ENCODE measurements at regions of chr3 and their contacts with region 1.

Region 1: DNA sequence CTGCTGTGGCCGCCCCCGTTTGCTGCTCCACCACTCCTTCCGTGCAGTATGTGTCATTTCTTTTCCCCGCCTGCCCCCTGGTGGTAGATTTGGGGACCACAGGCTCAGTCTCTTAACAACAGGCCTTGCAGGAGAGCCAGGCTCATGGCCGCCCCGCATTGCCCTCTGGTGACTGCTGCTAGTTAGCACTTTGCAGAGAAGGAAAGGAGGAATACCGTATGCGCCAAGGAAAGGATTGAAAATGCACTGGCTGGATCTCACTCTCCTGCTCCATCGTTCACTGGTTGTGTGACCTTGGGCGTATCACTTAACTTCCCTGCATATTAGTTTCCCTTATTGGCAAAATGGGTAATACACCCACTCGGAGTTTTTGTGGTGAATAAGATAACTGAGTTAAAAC is 39.3 kb upstream of the PXYLP1 start:
- DNase-seq: peak; percentile 96
- ATAC-seq: peak; percentile 99

Region 2: GRCh38 chr3:140922634-140923033 is 269.7 kb before region 1 on chr3:
- intact Hi-C with region 1: loop called in 1 of 2 experiments (anchors 10 kb)
- DNase-seq: no peak
- ATAC-seq: peak in 1 of 2 donors; percentile 10

Region 3: GRCh38 chr3:140980628-140981027 is 211.7 kb before region 1 on chr3:
- intact Hi-C with region 1: no loop called
- DNase-seq: no peak
- ATAC-seq: no peak

Region 4: DNA sequence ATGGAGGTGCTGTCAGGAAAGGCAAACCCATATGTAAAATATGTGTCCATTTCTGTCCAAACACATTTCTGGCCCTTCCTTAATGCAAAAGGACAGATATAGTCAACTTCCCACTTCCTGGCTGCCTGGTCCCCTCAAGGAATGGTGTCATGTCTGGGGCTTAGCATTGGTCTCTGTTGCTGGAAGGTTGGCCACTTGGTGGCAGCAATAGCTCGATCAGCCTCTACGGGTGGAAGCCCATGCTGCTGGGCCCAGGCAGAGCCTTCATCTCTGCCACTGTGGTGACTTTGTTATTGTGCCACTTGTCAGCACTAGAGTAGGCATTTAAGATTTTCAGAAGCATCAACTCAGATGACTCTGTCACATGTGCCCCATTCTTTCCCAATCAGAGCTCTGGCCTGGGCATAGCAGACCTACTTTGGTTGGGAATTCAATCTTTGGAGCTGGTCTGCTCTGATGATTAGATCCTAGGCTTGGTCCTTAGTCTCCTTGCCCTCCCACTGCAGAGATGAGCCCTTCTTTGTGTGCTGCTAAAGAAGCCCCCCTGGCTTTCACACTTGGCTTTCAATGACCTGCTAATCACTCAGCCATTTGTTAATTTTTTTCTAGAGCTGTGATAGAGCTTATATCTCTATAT is 192.2 kb before region 1 on chr3:
- intact Hi-C with region 1: loop called in 1 of 2 experiments (anchors 1 kb)
- DNase-seq: peak; percentile 74
- ATAC-seq: peak; percentile 95 to 96

Region 5: GRCh38 chr3:141011232-141011996 is 180.9 kb before region 1 on chr3:
- intact Hi-C with region 1: loop called in 1 of 2 experiments (anchors 5 kb)
- DNase-seq: peak; percentile 85
- ATAC-seq: peak; percentile 81 to 87

Region 6: GRCh38 chr3:141050576-141051442 is 141.5 kb before region 1 on chr3 and contains the start of gene SPSB4:
- intact Hi-C with region 1: loop called in 1 of 2 experiments (anchors 2 kb)
- DNase-seq: peak; percentile 76
- ATAC-seq: peak; percentile 92 to 94
- total RNA-seq, gene SPSB4: 3.0 to 6.9 TPM

Region 7: GRCh38 chr3:141105828-141106628 is 86.3 kb before region 1 on chr3:
- intact Hi-C with region 1: loop called in 1 of 2 experiments (anchors 5 kb)
- DNase-seq: peak; percentile 78
- ATAC-seq: peak in 1 of 2 donors; percentile 6

Region 8: GRCh38 chr3:141465221-141465620 is 272.9 kb after region 1 on chr3:
- intact Hi-C with region 1: no loop called
- DNase-seq: no peak
- ATAC-seq: no peak